WTC11 (cell line): ENCODE measurements at regions of chr9 and their contacts with region 1.

Region 1: DNA sequence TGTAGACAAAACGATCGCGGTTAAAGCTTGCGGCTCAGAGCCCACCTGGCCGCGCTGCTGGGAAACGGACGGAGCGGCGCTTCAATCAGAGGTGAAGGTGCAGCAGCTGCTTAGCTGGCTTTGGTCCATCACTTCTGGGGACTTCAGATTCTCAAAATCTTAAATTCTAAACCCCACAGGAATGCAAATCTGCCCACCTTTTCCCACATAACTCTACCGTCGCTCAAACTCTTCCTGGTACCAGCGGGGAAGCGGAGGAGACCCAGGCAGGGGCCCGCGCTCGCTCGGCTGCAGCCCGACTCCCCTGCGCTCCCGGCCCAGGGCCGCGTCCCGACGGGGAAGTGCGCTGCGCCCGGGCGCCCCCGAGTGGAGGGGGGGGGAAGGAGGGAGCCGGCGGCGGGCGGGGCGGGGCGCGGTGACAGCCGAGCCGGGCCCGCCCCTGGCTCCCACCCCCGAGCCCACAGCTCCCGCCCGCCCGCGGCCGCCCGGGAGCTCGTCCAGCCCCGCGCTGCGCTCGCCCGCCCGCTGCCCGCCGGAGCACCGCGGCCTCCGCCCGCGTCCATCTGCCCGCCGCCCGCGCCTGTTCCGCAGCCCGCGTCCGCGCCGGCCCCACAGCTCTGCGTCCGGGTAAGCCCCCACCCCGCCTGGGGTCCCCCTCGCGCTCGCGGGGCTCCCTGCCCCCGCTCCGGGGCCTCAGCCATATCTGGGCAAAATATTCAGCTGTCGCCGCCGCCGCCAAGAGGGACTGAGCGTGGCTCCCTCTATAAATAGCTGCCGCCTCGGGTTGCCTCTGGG is at the start of gene TMOD1:
- DNase-seq: peak; percentile 73
- ATAC-seq: peak; percentile 71
- H3K4me3 Mint-ChIP-seq: peak within 1 kb of the TSS; percentile 78
- H3K27ac Mint-ChIP-seq: no peak within 1 kb of the TSS
- H3K4me1 Mint-ChIP-seq: peaks cover 21% of the 10 kb centered on the region
- H3K27me3 Mint-ChIP-seq: peaks cover 40% of the 10 kb centered on the region
- CTCF ChIP-seq: no peak
- total RNA-seq, gene TMOD1: 1.0 to 1.6 TPM (median 1.4 TPM) in 3 replicates

Region 2: DNA sequence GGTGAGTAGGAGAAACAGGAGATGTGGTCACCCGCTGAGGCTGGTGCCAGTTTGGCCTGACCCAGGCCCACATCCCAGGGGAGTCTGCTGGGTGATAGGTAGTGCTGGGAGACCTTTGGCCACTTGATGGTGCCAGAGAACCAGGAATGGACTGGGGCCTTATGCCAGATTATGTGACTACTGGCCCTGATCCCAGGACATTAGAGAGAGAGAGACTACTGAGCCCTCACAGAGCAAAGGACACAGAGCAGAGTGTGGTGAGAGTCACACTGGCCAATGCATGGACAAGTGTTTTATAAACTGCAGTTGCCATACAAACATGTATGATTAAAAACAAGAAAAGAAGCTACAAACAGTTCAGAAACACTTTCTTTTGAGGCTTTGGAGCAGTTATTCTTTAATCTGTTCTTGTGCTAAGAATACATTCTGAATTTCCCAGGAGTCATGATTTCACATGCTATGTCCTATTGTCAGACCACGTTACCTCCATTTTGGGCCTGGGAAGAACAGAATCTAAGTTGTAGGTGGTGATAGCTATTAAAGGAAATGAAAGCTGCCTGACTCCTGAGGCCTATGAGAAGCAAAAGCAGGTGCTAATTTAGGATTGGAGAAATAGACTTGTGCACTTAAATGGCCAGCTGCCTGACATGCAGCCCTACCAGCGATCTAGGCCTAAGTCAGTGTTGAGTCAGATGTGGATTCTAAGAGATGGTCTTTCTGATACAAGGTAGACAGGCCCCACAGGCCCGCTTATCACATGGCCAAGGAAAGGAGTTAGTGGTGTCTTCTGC is 32.5 kb before region 1 on chr9:
- CTCF ChIA-PET with region 1: interaction called, 30 read pairs
- POLR2A ChIA-PET with region 1: interaction called, 7 read pairs
- DNase-seq: peak; percentile 77
- ATAC-seq: peak; percentile 100
- H3K4me3 Mint-ChIP-seq: no peak overlapping the region
- H3K27ac Mint-ChIP-seq: no peak overlapping the region
- H3K4me1 Mint-ChIP-seq: no peaks in the 10 kb centered on the region
- H3K27me3 Mint-ChIP-seq: no peaks in the 10 kb centered on the region
- CTCF ChIP-seq: peak; percentile 38; the same call in 1 of the 2 replicates

Region 3: DNA sequence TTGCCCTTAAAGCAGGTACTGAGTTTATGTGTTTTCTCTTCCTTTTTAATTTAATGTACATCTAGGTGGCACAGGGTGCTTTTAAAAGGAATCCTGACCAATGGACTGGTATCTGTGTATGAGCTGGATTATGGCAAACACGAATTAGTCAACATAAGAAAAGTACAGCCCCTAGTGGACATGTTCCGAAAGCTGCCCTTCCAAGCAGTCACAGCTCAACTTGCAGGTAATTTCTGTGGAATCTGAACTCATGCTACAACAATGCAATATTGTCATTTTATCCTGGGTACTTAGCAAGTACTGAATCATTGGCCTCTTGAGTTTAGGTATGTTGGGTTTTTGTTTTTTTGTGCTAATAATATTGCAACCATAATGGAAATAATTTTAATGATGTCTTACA is 14.3 kb before region 1 on chr9:
- CTCF ChIA-PET with region 1: interaction called, 23 read pairs
- POLR2A ChIA-PET with region 1: no interaction called
- DNase-seq: no peak
- ATAC-seq: no peak
- H3K4me3 Mint-ChIP-seq: no peak overlapping the region
- H3K27ac Mint-ChIP-seq: no peak overlapping the region
- H3K4me1 Mint-ChIP-seq: no peaks in the 10 kb centered on the region
- H3K27me3 Mint-ChIP-seq: peaks cover 9% of the 10 kb centered on the region
- CTCF ChIP-seq: 0 out of 2 replicates have a peak, but pooled peaks have one; percentile 16

Region 4: GRCh38 chr9:97528529-97529230 is 27.3 kb after region 1 on chr9:
- CTCF ChIA-PET with region 1: interaction called, 14 read pairs
- POLR2A ChIA-PET with region 1: no interaction called
- DNase-seq: peak; percentile 64
- ATAC-seq: peak; percentile 91
- H3K4me3 Mint-ChIP-seq: no peak overlapping the region
- H3K27ac Mint-ChIP-seq: peak overlapping the region; percentile 97
- H3K4me1 Mint-ChIP-seq: peaks cover 33% of the 10 kb centered on the region
- H3K27me3 Mint-ChIP-seq: no peaks in the 10 kb centered on the region
- CTCF ChIP-seq: no peak

Region 5: DNA sequence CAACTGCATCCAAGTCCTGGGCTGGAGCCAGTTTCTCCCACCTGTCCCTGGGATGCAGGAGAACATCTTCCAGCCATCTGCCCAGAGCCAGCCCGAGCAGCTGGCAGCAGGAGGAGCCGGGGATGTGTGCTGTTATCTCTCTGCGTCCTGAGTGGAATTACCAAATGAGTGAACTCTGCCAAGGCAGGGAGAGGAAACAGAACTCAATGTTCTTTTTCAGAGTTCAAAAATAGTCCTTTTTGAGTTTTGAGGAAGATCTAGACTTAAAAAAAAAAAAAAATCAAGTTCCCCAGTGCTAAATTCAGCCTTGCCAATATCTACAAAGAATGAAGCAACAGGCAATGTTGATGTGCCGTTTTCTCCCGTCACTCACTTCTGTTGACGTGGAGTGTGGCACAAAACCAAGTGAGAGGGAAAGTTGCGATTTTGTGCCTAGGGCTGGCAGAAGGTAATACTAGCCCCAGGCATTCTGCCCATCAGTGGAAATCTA is 56.3 kb after region 1 on chr9:
- CTCF ChIA-PET with region 1: interaction called, 10 read pairs
- POLR2A ChIA-PET with region 1: no interaction called
- DNase-seq: no peak
- ATAC-seq: no peak
- H3K4me3 Mint-ChIP-seq: no peak overlapping the region
- H3K27ac Mint-ChIP-seq: no peak overlapping the region
- H3K4me1 Mint-ChIP-seq: peaks cover 23% of the 10 kb centered on the region
- H3K27me3 Mint-ChIP-seq: no peaks in the 10 kb centered on the region
- CTCF ChIP-seq: no peak

Region 6: GRCh38 chr9:97615439-97616072 is 114.2 kb after region 1 on chr9:
- CTCF ChIA-PET with region 1: interaction called, 25 read pairs
- POLR2A ChIA-PET with region 1: interaction called, 3 read pairs
- DNase-seq: peak; percentile 64
- ATAC-seq: peak; percentile 51; the same call in 1 of the 2 replicates
- H3K4me3 Mint-ChIP-seq: no peak overlapping the region
- H3K27ac Mint-ChIP-seq: no peak overlapping the region
- H3K4me1 Mint-ChIP-seq: no peaks in the 10 kb centered on the region
- H3K27me3 Mint-ChIP-seq: no peaks in the 10 kb centered on the region
- CTCF ChIP-seq: peak; percentile 63